ENCODE measurements at regions of chr2 and their contacts with region 1.

Region 1: DNA sequence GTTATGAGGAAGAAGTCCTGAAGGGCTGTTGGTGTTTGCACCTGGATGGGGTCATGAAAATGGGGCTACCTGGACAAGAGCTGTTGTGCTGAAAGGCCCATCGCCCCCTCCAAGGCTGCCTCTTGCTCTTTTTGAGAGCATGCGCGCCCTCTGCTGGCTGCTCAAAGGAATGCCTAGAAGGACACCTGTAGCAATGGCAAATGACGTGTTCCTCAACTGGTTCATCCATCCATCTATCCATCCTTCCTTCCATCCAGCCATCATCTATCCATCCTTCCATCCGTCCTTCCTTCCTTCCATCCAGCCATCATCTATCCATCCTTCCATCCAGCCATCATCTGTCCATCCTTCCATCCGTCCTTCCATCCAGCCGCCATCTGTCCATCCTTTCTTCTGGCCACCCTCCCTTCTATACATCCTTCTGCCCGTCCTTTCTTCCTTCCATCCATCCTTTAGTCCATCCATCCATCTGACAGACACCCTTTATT is 17.2 kb upstream of the RPL31 start:
- DNase-seq: peak; percentile 55
- H3K4me3 Mint-ChIP-seq: no peak overlapping the region
- H3K27ac Mint-ChIP-seq: no peak overlapping the region
- H3K4me1 Mint-ChIP-seq: no peaks in the 10 kb centered on the region
- H3K27me3 Mint-ChIP-seq: peaks cover 1% of the 10 kb centered on the region

Region 2: GRCh38 chr2:100427628-100428258 is 557.2 kb before region 1 on chr2:
- intact Hi-C with region 1: loop called (anchors 10 kb)
- DNase-seq: peak; percentile 50
- H3K4me3 Mint-ChIP-seq: no peak overlapping the region
- H3K27ac Mint-ChIP-seq: no peak overlapping the region
- H3K4me1 Mint-ChIP-seq: peaks cover 9% of the 10 kb centered on the region
- H3K27me3 Mint-ChIP-seq: peaks cover 38% of the 10 kb centered on the region

Region 3: DNA sequence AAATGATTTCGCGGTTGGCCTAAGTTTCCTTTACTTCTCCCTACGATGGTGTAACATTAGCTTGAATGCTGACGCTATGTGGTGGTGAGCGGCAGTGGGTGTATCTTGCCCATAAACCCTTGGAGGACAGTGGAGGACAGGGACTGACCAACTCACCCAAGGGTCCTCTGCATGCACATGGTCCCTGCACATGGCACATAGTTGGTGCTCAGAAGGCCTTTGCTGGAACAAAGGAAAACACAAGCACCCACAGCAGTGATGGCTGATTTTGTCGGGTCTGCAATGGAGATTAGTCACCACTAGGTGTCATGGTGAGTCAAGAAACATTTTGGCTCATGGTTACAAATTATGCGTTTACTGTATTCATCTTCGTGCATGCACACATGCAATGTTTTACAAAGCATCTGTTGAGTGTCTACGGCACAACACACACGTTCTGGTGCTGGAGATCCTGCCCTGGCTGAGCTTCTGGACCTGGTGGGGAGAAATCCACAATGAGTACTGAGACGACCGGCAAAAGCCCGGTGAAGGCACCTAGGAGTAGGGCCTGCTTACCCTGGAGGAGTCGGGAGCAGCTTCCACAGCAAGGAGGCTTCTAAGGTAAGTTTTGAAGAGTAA is 378.1 kb before region 1 on chr2:
- intact Hi-C with region 1: loop called (anchors 1 kb)
- DNase-seq: peak; percentile 21
- H3K4me3 Mint-ChIP-seq: no peak overlapping the region
- H3K27ac Mint-ChIP-seq: no peak overlapping the region
- H3K4me1 Mint-ChIP-seq: peaks cover 9% of the 10 kb centered on the region
- H3K27me3 Mint-ChIP-seq: peaks cover 4% of the 10 kb centered on the region

Region 4: GRCh38 chr2:100730346-100730745 is 254.6 kb before region 1 on chr2:
- intact Hi-C with region 1: loop called (anchors 2 kb)
- DNase-seq: no peak
- H3K4me3 Mint-ChIP-seq: no peak overlapping the region
- H3K27ac Mint-ChIP-seq: no peak overlapping the region
- H3K4me1 Mint-ChIP-seq: no peaks in the 10 kb centered on the region
- H3K27me3 Mint-ChIP-seq: peaks cover 19% of the 10 kb centered on the region

Region 5: GRCh38 chr2:101446869-101447268 is 461.9 kb after region 1 on chr2:
- intact Hi-C with region 1: no loop called
- DNase-seq: no peak
- H3K4me3 Mint-ChIP-seq: no peak overlapping the region
- H3K27ac Mint-ChIP-seq: no peak overlapping the region
- H3K4me1 Mint-ChIP-seq: peaks cover 27% of the 10 kb centered on the region
- H3K27me3 Mint-ChIP-seq: no peaks in the 10 kb centered on the region

Measured in activated T-helper 2 cell treated with anti-CD3 and anti-CD28 coated beads, Interferon-gamma antibody, Interleukin-2, Interleukin-4, amounts not matched to agents 10 μg/mL and 5 μg/mL and 100 μg/mL, durations not matched to agents 14 hours and 24 hours and 36 hours (primary cell).